GM12878 (cell line): ENCODE measurements at regions of chr6 and their contacts with region 1.

Region 1: GRCh38 chr6:4856785-4857184 is 80.6 kb downstream of the CDYL start:
- DNase-seq: no peak
- ATAC-seq: peak; percentile 66
- H3K4me3 ChIP-seq: no peak overlapping the region
- H3K27ac ChIP-seq: no peak overlapping the region
- H3K4me1 ChIP-seq: no peaks in the 10 kb centered on the region
- H3K27me3 ChIP-seq: no peaks in the 10 kb centered on the region
- CTCF ChIP-seq: peak in 2 of 3 experiments; percentile 16 to 17; a peak in 3 of 6 replicates
- EP300 ChIP-seq: no peak
- POLR2A ChIP-seq: no peak
- RAD21 ChIP-seq: 0 out of 2 replicates have a peak, but pooled peaks have one; percentile 14

Region 2: GRCh38 chr6:4936681-4937041 is 79.9 kb after region 1 on chr6:
- CTCF ChIA-PET with region 1: no interaction called
- POLR2A ChIA-PET with region 1: no interaction called
- RAD21 ChIA-PET with region 1: interaction called, 4 read pairs
- SMC1A ChIA-PET with region 1: interaction called, 3 read pairs
- in situ Hi-C with region 1: no loop called
- intact Hi-C with region 1: loop called (anchors 5 kb)
- DNase-seq: no peak
- ATAC-seq: peak; percentile 67
- H3K4me3 ChIP-seq: no peak overlapping the region
- H3K27ac ChIP-seq: no peak overlapping the region
- H3K4me1 ChIP-seq: peaks cover 12% of the 10 kb centered on the region
- H3K27me3 ChIP-seq: no peaks in the 10 kb centered on the region
- CTCF ChIP-seq: peak; percentile 48 to 70 (median 70); a peak in 5 of 6 replicates
- EP300 ChIP-seq: no peak
- POLR2A ChIP-seq: no peak
- RAD21 ChIP-seq: peak; percentile 80